CD8-positive, alpha-beta T cell (primary cell): ENCODE measurements at regions of chr16 and their contacts with region 1.

Region 1: GRCh38 chr16:16197847-16198365 is 25.4 kb downstream of the ABCC6 start:
- DNase-seq: no peak
- ATAC-seq: no peak
- H3K4me3 ChIP-seq: no peak overlapping the region
- H3K4me3 Mint-ChIP-seq: no peak overlapping the region
- H3K27ac ChIP-seq: no peak overlapping the region
- H3K27ac Mint-ChIP-seq: no peak overlapping the region
- H3K4me1 ChIP-seq: no peaks in the 10 kb centered on the region
- H3K4me1 Mint-ChIP-seq: peaks cover 3% of the 10 kb centered on the region
- H3K27me3 ChIP-seq: no peaks in the 10 kb centered on the region
- H3K27me3 Mint-ChIP-seq: peaks cover 6% of the 10 kb centered on the region
- CTCF ChIP-seq: no peak

Region 2: DNA sequence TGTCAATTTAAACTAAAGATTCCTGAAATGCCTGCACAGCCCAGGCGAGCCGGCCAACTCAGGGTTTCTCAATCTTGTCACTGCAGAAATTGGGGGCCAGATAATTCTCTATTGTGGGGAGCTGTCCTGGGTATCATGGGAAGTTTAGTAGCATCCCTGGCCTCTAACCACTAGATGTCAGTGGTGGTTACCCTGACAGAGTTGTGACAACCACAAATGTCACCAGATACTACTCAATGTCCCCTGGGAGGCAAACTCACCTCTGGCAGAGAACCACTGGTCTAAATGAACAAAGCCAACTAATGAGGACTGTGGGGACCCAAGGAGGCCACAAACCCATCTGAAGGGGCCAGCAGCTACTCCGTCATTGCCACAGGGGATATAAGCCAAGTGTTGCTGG is 432.0 kb before region 1 on chr16:
- CTCF ChIA-PET with region 1: no interaction called
- POLR2A ChIA-PET with region 1: no interaction called
- intact Hi-C with region 1: loop called in 1 of 2 experiments (anchors 5 kb)
- DNase-seq: peak in 4 of 9 experiments; percentile 9 to 60 (median 32)
- ATAC-seq: peak; percentile 40
- H3K4me3 ChIP-seq: no peak overlapping the region
- H3K4me3 Mint-ChIP-seq: no peak overlapping the region
- H3K27ac ChIP-seq: no peak overlapping the region
- H3K27ac Mint-ChIP-seq: no peak overlapping the region
- H3K4me1 ChIP-seq: no peaks in the 10 kb centered on the region
- H3K4me1 Mint-ChIP-seq: no peaks in the 10 kb centered on the region
- H3K27me3 ChIP-seq: no peaks in the 10 kb centered on the region
- H3K27me3 Mint-ChIP-seq: peaks cover 35% of the 10 kb centered on the region
- CTCF ChIP-seq: peak; percentile 34

Region 3: GRCh38 chr16:16183562-16183961 is 14.3 kb before region 1 on chr16:
- CTCF ChIA-PET with region 1: no interaction called
- POLR2A ChIA-PET with region 1: no interaction called
- intact Hi-C with region 1: no loop called
- DNase-seq: no peak
- ATAC-seq: no peak
- H3K4me3 ChIP-seq: no peak overlapping the region
- H3K4me3 Mint-ChIP-seq: no peak overlapping the region
- H3K27ac ChIP-seq: no peak overlapping the region
- H3K27ac Mint-ChIP-seq: no peak overlapping the region
- H3K4me1 ChIP-seq: no peaks in the 10 kb centered on the region
- H3K4me1 Mint-ChIP-seq: no peaks in the 10 kb centered on the region
- H3K27me3 ChIP-seq: no peaks in the 10 kb centered on the region
- H3K27me3 Mint-ChIP-seq: no peaks in the 10 kb centered on the region
- CTCF ChIP-seq: no peak